Mucosa of descending colon (tissue), 3 donors: ENCODE measurements at regions of chr12 and their contacts with region 1.

Region 1: GRCh38 chr12:40010899-40011774 is 94.7 kb downstream of the SLC2A13 start:
- DNase-seq: peak in 1 of 3 donors; percentile 86
- ATAC-seq: peak; percentile 73
- H3K4me3 ChIP-seq: no peak overlapping the region
- H3K4me1 ChIP-seq: peaks cover 19% of the 10 kb centered on the region
- CTCF ChIP-seq: no peak

Region 2: DNA sequence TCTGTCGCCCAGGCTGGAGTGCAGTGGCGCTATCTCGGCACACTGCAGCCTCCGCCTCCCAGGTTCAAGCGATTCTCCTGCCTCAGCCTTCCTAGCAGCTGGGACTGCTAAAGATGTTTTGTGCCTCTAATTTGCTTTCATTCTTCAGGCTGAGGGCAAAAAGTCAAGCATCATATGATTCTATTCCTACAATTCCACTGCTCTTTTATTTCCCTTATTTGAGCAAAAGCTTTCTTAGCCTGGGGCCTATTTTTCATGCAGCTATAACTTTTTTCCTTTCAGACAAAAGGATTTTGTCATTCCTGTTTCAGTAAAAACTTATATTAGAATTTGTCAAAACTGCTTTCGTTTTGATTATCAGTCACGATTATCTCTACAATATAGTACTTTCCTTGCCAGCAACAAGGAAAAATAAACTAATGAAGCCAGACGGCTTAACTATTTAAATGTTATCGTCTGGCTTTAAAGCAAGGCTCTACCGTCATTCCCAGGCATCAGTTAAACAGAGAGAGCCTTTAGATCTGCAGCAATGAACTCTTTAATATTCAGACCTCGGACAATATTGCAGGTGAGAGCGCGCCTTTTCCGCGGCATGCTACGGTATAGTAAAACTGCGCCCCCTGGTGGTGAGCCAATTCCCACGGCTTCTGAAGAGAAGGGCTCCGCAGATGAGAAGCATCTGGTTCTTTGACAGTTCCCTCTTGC is 96.1 kb after region 1 on chr12:
- intact Hi-C with region 1: loop called (anchors 5 kb)
- DNase-seq: peak; percentile 87 to 98 (median 90)
- ATAC-seq: peak; percentile 60
- H3K4me3 ChIP-seq: no peak overlapping the region
- H3K4me1 ChIP-seq: peaks cover 22% of the 10 kb centered on the region
- CTCF ChIP-seq: peak; percentile 64

Region 3: GRCh38 chr12:40181490-40181889 is 170.4 kb after region 1 on chr12:
- intact Hi-C with region 1: no loop called
- DNase-seq: no peak
- ATAC-seq: no peak
- H3K4me3 ChIP-seq: no peak overlapping the region
- H3K4me1 ChIP-seq: no peaks in the 10 kb centered on the region
- CTCF ChIP-seq: no peak